Naive thymus-derived CD4-positive, alpha-beta T cell (primary cell): ENCODE measurements at regions of chr10 and their contacts with region 1.

Region 1: DNA sequence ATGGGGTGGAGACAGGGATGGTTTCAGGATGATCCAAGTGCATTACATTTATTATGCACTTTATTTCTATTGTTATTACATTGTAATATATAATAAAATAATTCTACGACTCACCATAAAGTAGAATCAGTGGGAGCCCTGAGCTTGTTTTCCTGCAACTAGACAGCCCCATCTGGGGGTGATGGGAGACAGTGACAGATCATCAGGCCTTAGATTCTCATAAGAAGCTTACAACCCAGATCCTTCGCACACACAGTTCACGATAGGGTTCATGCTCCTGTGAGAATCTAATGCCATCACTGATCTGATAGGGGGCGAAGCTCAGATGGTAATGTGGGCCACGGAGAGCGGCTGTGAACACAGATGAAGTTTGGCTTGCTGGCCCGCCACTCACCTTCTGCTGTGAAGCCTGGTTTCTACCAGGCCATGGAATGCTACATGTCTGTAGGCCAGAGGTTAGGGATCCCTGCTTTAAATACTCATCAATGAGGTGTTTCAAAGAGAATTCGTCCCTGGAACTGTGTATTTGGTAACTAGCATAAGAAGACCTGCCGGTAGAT is 21.2 kb upstream of the PRKCQ start:
- DNase-seq: peak in 6 of 9 donors; percentile 62 to 71 (median 65)
- ATAC-seq: peak; percentile 65
- H3K4me3 ChIP-seq: no peak overlapping the region
- H3K4me3 Mint-ChIP-seq: peak overlapping the region; percentile 52 to 86 (median 67)
- H3K27ac ChIP-seq: peak overlapping the region; percentile 63
- H3K27ac Mint-ChIP-seq: peak overlapping the region; percentile 60 to 100 (median 96)
- H3K4me1 ChIP-seq: peaks cover 17 to 56% of the 10 kb centered on the region in 2 donors
- H3K4me1 Mint-ChIP-seq: peaks cover 37 to 94% (median 86%) of the 10 kb centered on the region in 7 donors
- H3K27me3 ChIP-seq: no peaks in the 10 kb centered on the region
- H3K27me3 Mint-ChIP-seq: no peaks in the 10 kb centered on the region

Region 2: GRCh38 chr10:6445501-6446316 is 155.6 kb before region 1 on chr10:
- CTCF ChIA-PET with region 1: interaction called, 8 read pairs
- POLR2A ChIA-PET with region 1: interaction called, 3 read pairs
- intact Hi-C with region 1: loop called (anchors 1 kb)
- DNase-seq: peak in 8 of 9 donors; percentile 28 to 49 (median 43)
- ATAC-seq: peak; percentile 64
- H3K4me3 ChIP-seq: no peak overlapping the region
- H3K4me3 Mint-ChIP-seq: peak overlapping the region in 5 of 10 donors; percentile 0 to 60 (median 30)
- H3K27ac ChIP-seq: peak overlapping the region; percentile 17
- H3K27ac Mint-ChIP-seq: peak overlapping the region; percentile 4 to 84 (median 66)
- H3K4me1 ChIP-seq: no peaks in the 10 kb centered on the region
- H3K4me1 Mint-ChIP-seq: peaks cover 10 to 49% (median 31%) of the 10 kb centered on the region in 7 donors
- H3K27me3 ChIP-seq: no peaks in the 10 kb centered on the region
- H3K27me3 Mint-ChIP-seq: no peaks in the 10 kb centered on the region

Region 3: GRCh38 chr10:6530211-6530840 is 71.0 kb before region 1 on chr10:
- CTCF ChIA-PET with region 1: interaction called, 4 read pairs
- POLR2A ChIA-PET with region 1: interaction called, 4 read pairs
- intact Hi-C with region 1: loop called in 1 of 2 experiments (anchors 1 kb)
- DNase-seq: peak; percentile 37 to 89 (median 85)
- ATAC-seq: peak; percentile 96
- H3K4me3 ChIP-seq: peak overlapping the region; percentile 34
- H3K4me3 Mint-ChIP-seq: peak overlapping the region; percentile 84 to 95 (median 88)
- H3K27ac ChIP-seq: peak overlapping the region; percentile 74
- H3K27ac Mint-ChIP-seq: peak overlapping the region; percentile 97 to 100 (median 99)
- H3K4me1 ChIP-seq: peaks cover 46 to 58% of the 10 kb centered on the region in 2 donors
- H3K4me1 Mint-ChIP-seq: peaks cover 67 to 99% (median 91%) of the 10 kb centered on the region in 7 donors
- H3K27me3 ChIP-seq: no peaks in the 10 kb centered on the region
- H3K27me3 Mint-ChIP-seq: no peaks in the 10 kb centered on the region

Region 4: DNA sequence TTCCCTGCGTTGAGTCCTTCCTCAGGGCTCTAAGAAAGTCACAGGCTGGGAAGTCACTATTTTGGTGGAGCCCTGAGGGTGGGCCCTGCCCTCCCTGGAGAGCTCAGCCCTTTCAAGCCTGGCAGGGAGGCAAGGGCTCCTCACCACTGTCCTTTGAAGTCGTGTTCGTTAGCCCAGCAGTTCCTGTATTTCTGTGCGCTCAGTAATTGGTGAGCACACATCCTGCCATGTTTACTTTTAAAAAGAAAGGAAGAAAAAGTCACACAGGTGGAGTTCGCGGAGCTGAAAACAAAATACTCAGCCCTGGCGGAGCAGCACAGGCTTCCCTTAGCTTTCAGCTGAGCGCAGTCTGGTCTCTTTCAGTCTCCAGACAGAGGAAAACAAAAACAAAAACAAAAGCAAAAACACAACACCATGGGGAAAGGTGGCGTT is 58.3 kb before region 1 on chr10:
- CTCF ChIA-PET with region 1: no interaction called
- POLR2A ChIA-PET with region 1: interaction called, 6 read pairs
- intact Hi-C with region 1: loop called in 1 of 2 experiments (anchors 2 kb)
- DNase-seq: peak in 8 of 9 donors; percentile 45 to 83 (median 78)
- ATAC-seq: peak; percentile 90
- H3K4me3 ChIP-seq: peak overlapping the region; percentile 64
- H3K4me3 Mint-ChIP-seq: peak overlapping the region; percentile 79 to 95 (median 88)
- H3K27ac ChIP-seq: peak overlapping the region; percentile 73
- H3K27ac Mint-ChIP-seq: peak overlapping the region; percentile 97 to 100 (median 99)
- H3K4me1 ChIP-seq: peaks cover 55 to 66% of the 10 kb centered on the region in 2 donors
- H3K4me1 Mint-ChIP-seq: peaks cover 43 to 90% (median 76%) of the 10 kb centered on the region in 7 donors
- H3K27me3 ChIP-seq: no peaks in the 10 kb centered on the region
- H3K27me3 Mint-ChIP-seq: no peaks in the 10 kb centered on the region

Region 5: GRCh38 chr10:6586501-6586900 is 14.8 kb before region 1 on chr10:
- CTCF ChIA-PET with region 1: interaction called, 206 read pairs
- POLR2A ChIA-PET with region 1: interaction called, 378 read pairs
- intact Hi-C with region 1: no loop called
- DNase-seq: peak in 2 of 9 donors; percentile 30 to 48
- ATAC-seq: peak; percentile 37
- H3K4me3 ChIP-seq: peak overlapping the region; percentile 61
- H3K4me3 Mint-ChIP-seq: peak overlapping the region; percentile 86 to 99 (median 93)
- H3K27ac ChIP-seq: peak overlapping the region; percentile 94
- H3K27ac Mint-ChIP-seq: peak overlapping the region; percentile 94 to 99 (median 97)
- H3K4me1 ChIP-seq: peaks cover 44 to 57% of the 10 kb centered on the region in 2 donors
- H3K4me1 Mint-ChIP-seq: peaks cover 38 to 100% (median 84%) of the 10 kb centered on the region in 7 donors
- H3K27me3 ChIP-seq: no peaks in the 10 kb centered on the region
- H3K27me3 Mint-ChIP-seq: no peaks in the 10 kb centered on the region

Region 6: GRCh38 chr10:6647811-6648526 is 46.6 kb after region 1 on chr10:
- CTCF ChIA-PET with region 1: interaction called, 9 read pairs
- POLR2A ChIA-PET with region 1: interaction called, 8 read pairs
- intact Hi-C with region 1: loop called in 1 of 2 experiments (anchors 1 kb)
- DNase-seq: peak; percentile 37 to 75 (median 64)
- ATAC-seq: peak; percentile 94
- H3K4me3 ChIP-seq: no peak overlapping the region
- H3K4me3 Mint-ChIP-seq: peak overlapping the region in 1 of 10 donors; percentile 32
- H3K27ac ChIP-seq: no peak overlapping the region
- H3K27ac Mint-ChIP-seq: peak overlapping the region in 3 of 9 donors; percentile 19 to 67 (median 38)
- H3K4me1 ChIP-seq: peaks cover 5 to 10% of the 10 kb centered on the region in 2 donors
- H3K4me1 Mint-ChIP-seq: peaks cover 0 to 46% (median 27%) of the 10 kb centered on the region in 7 donors
- H3K27me3 ChIP-seq: no peaks in the 10 kb centered on the region
- H3K27me3 Mint-ChIP-seq: no peaks in the 10 kb centered on the region

Region 7: DNA sequence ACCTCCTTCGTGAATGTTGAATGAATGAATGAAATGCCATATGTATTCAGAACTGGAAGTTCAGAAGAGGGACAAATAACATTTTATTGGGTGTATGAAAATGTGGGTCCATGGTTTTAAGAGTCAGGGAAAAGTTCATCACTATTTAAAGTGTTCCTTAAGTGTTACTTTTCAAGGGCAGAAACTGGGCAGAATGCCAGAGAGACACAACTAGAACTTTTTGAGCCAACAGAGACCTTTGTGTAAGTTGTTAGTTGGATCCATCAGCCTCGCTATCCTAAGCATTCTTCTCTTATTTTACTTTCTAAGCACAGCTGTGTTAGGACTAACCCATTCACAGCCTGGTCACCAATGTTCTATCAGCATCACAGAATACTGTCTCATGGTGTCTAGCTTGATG is 1203.4 kb after region 1 on chr10:
- CTCF ChIA-PET with region 1: no interaction called
- POLR2A ChIA-PET with region 1: no interaction called
- intact Hi-C with region 1: no loop called
- DNase-seq: no peak
- ATAC-seq: no peak
- H3K4me3 ChIP-seq: no peak overlapping the region
- H3K4me3 Mint-ChIP-seq: no peak overlapping the region
- H3K27ac ChIP-seq: no peak overlapping the region
- H3K27ac Mint-ChIP-seq: peak overlapping the region in 3 of 9 donors; percentile 1 to 60 (median 29)
- H3K4me1 ChIP-seq: no peaks in the 10 kb centered on the region
- H3K4me1 Mint-ChIP-seq: peaks cover 0 to 3% (median 0%) of the 10 kb centered on the region in 7 donors
- H3K27me3 ChIP-seq: no peaks in the 10 kb centered on the region
- H3K27me3 Mint-ChIP-seq: no peaks in the 10 kb centered on the region